Activated B cell treated with CpG ODN at 0.5 μM for 24 hours (primary cell): ENCODE measurements at regions of chr3 and their contacts with region 1.

Region 1: GRCh38 chr3:13282986-13283876 is 136.9 kb downstream of the NUP210 start:
- DNase-seq: peak; percentile 33
- ATAC-seq: peak; percentile 75
- H3K4me3 Mint-ChIP-seq: peak overlapping the region; percentile 78
- H3K27ac Mint-ChIP-seq: no peak overlapping the region
- H3K4me1 Mint-ChIP-seq: peaks cover 15% of the 10 kb centered on the region
- H3K27me3 Mint-ChIP-seq: peaks cover 43% of the 10 kb centered on the region
- CTCF ChIP-seq: no peak

Region 2: GRCh38 chr3:13110678-13111116 is 172.5 kb before region 1 on chr3:
- CTCF ChIA-PET with region 1: interaction called, 3 read pairs
- POLR2A ChIA-PET with region 1: no interaction called
- intact Hi-C with region 1: loop called (anchors 5 kb)
- DNase-seq: peak; percentile 62
- ATAC-seq: peak; percentile 90
- H3K4me3 Mint-ChIP-seq: peak overlapping the region; percentile 73
- H3K27ac Mint-ChIP-seq: peak overlapping the region; percentile 96
- H3K4me1 Mint-ChIP-seq: peaks cover 60% of the 10 kb centered on the region
- H3K27me3 Mint-ChIP-seq: no peaks in the 10 kb centered on the region
- CTCF ChIP-seq: no peak

Region 3: GRCh38 chr3:13229273-13229949 is 53.8 kb before region 1 on chr3:
- CTCF ChIA-PET with region 1: no interaction called
- POLR2A ChIA-PET with region 1: no interaction called
- intact Hi-C with region 1: loop called (anchors 5 kb)
- DNase-seq: no peak
- ATAC-seq: no peak
- H3K4me3 Mint-ChIP-seq: no peak overlapping the region
- H3K27ac Mint-ChIP-seq: no peak overlapping the region
- H3K4me1 Mint-ChIP-seq: peaks cover 14% of the 10 kb centered on the region
- H3K27me3 Mint-ChIP-seq: peaks cover 2% of the 10 kb centered on the region
- CTCF ChIP-seq: no peak

Region 4: GRCh38 chr3:13268961-13269441 is 14.2 kb before region 1 on chr3:
- CTCF ChIA-PET with region 1: no interaction called
- POLR2A ChIA-PET with region 1: no interaction called
- intact Hi-C with region 1: no loop called
- DNase-seq: no peak
- ATAC-seq: no peak
- H3K4me3 Mint-ChIP-seq: no peak overlapping the region
- H3K27ac Mint-ChIP-seq: no peak overlapping the region
- H3K4me1 Mint-ChIP-seq: peaks cover 2% of the 10 kb centered on the region
- H3K27me3 Mint-ChIP-seq: peaks cover 21% of the 10 kb centered on the region
- CTCF ChIP-seq: no peak